SK-N-SH (cell line): ENCODE measurements at regions of chr17 and their contacts with region 1.

Region 1: GRCh38 chr17:57597531-57598453 is 147.3 kb downstream of the CCDC182 start:
- DNase-seq: peak; percentile 82
- H3K4me3 ChIP-seq: no peak overlapping the region; a peak in 1 of 4 replicates
- H3K27ac ChIP-seq: peak overlapping the region; percentile 48 to 99
- H3K4me1 ChIP-seq: peaks cover 5 to 87% of the 10 kb centered on the region in 2 experiments; a peak in 3 of 4 replicates
- H3K27me3 ChIP-seq: no peaks in the 10 kb centered on the region
- CTCF ChIP-seq: peak; percentile 99
- EP300 ChIP-seq: peak; percentile 46 to 99; a peak in 2 of 4 replicates
- RAD21 ChIP-seq: peak; percentile 87

Region 2: GRCh38 chr17:57535249-57535966 is 62.4 kb before region 1 on chr17:
- CTCF ChIA-PET with region 1: interaction called, 83 read pairs
- POLR2A ChIA-PET with region 1: interaction called, 10 read pairs
- DNase-seq: peak; percentile 71
- H3K4me3 ChIP-seq: no peak overlapping the region
- H3K27ac ChIP-seq: peak overlapping the region in 1 of 2 experiments; percentile 100; a peak in 2 of 4 replicates
- H3K4me1 ChIP-seq: peaks cover 34 to 96% of the 10 kb centered on the region in 2 experiments
- H3K27me3 ChIP-seq: no peaks in the 10 kb centered on the region
- CTCF ChIP-seq: no peak
- EP300 ChIP-seq: peak in 1 of 2 experiments; percentile 88; a peak in 2 of 4 replicates
- RAD21 ChIP-seq: 0 out of 2 replicates have a peak, but pooled peaks have one; percentile 23

Region 3: GRCh38 chr17:57570724-57571344 is 27.0 kb before region 1 on chr17:
- CTCF ChIA-PET with region 1: interaction called, 74 read pairs
- POLR2A ChIA-PET with region 1: interaction called, 19 read pairs
- DNase-seq: no peak
- H3K4me3 ChIP-seq: no peak overlapping the region
- H3K27ac ChIP-seq: peak overlapping the region in 1 of 2 experiments; percentile 100; a peak in 2 of 4 replicates
- H3K4me1 ChIP-seq: peaks cover 0 to 87% of the 10 kb centered on the region in 2 experiments; a peak in 2 of 4 replicates
- H3K27me3 ChIP-seq: no peaks in the 10 kb centered on the region
- CTCF ChIP-seq: no peak
- EP300 ChIP-seq: peak in 1 of 2 experiments; percentile 41; a peak in 1 of 4 replicates
- RAD21 ChIP-seq: peak; percentile 5; the same call in 1 of the 2 replicates

Region 4: DNA sequence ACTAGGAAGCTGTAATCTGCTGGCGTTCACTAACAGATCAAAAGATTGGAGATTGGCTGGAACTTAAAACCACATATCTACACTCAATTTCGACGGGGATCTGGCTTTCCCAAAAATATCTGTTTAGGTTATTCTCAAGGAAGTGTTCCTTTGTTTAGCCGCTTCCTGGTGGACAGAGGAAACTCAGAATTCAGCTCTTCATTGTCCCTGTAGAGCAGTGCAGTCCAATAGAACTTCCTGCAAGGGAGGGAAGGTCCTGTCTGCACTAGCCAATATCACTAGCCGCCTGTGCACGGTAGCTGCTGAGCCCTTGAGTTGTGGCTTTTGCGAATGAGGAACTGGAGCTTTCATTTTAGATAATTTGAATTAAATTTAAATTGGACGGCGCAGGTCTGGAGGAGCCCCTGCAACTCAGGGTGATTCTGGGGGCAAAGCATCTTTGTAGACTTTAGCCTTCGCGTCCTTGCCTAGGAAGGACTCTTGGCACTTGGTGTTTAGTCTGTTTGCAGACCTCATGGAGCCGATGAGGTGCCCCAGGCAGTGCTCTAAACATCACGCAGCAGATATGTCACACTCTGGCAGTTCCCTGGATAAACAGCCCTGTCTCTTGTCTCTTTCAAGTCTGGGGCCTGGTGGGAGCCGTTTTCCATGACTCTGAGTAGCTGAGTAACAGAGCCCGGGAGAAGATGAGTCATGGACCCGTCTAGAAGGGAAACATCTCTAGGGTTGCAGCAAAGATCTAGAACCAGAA is 25.1 kb after region 1 on chr17:
- CTCF ChIA-PET with region 1: interaction called, 80 read pairs
- POLR2A ChIA-PET with region 1: interaction called, 54 read pairs
- DNase-seq: peak; percentile 82
- H3K4me3 ChIP-seq: no peak overlapping the region
- H3K27ac ChIP-seq: peak overlapping the region; percentile 87 to 100
- H3K4me1 ChIP-seq: peaks cover 53 to 84% of the 10 kb centered on the region in 2 experiments
- H3K27me3 ChIP-seq: no peaks in the 10 kb centered on the region
- CTCF ChIP-seq: no peak
- EP300 ChIP-seq: peak; percentile 71 to 97; a peak in 3 of 4 replicates
- RAD21 ChIP-seq: peak; percentile 46

Region 5: GRCh38 chr17:57739402-57740392 is 141.9 kb after region 1 on chr17:
- CTCF ChIA-PET with region 1: interaction called, 46 read pairs
- POLR2A ChIA-PET with region 1: interaction called, 3 read pairs
- DNase-seq: peak; percentile 76
- H3K4me3 ChIP-seq: no peak overlapping the region
- H3K27ac ChIP-seq: peak overlapping the region in 1 of 2 experiments; percentile 96; a peak in 3 of 4 replicates
- H3K4me1 ChIP-seq: peaks cover 0 to 17% of the 10 kb centered on the region in 2 experiments; a peak in 2 of 4 replicates
- H3K27me3 ChIP-seq: peaks cover 12% of the 10 kb centered on the region
- CTCF ChIP-seq: peak; percentile 45
- EP300 ChIP-seq: peak in 1 of 2 experiments; percentile 81; a peak in 2 of 4 replicates
- RAD21 ChIP-seq: peak; percentile 65

Region 6: DNA sequence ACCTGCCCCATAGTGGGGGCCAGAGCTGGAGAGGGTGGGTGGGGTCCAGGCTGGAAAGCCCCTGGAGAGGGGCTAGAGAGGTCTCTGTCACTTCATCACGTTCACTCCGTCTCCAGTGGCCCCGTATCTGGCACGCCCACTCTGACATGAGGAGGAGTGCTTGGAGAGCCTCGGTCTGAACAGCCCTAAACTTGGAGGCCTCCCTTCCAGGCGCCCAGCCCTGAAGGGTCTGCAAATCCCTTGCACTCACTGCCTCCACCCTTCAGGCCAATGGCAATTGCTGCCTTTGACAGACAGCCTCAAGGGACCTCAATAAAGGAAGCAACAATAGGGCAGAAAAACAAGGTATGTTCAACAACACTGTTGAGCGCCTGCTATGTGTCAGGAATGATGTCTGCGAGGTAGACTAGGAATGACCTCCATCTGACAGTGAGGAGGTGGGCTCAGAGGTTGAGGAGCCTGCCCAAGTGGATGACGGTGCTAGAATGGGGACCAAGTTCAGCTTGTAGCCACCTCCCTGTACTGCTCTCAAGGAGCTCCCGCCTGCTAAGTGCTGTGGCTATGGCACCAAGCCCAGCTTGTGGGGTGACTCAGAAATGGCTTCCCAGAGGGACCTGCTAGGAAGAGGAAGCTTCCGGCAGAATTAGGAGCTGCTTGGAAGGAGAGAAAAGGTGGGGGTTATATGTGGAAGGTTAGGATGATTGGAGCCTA is 591.8 kb after region 1 on chr17:
- CTCF ChIA-PET with region 1: no interaction called
- POLR2A ChIA-PET with region 1: no interaction called
- DNase-seq: peak; percentile 30
- H3K4me3 ChIP-seq: no peak overlapping the region
- H3K27ac ChIP-seq: no peak overlapping the region
- H3K4me1 ChIP-seq: no peaks in the 10 kb centered on the region; a peak in 1 of 4 replicates
- H3K27me3 ChIP-seq: peaks cover 25% of the 10 kb centered on the region; the same call in 1 of the 2 replicates
- CTCF ChIP-seq: no peak
- EP300 ChIP-seq: no peak
- RAD21 ChIP-seq: no peak